ENCODE measurements at regions of chrX and their contacts with region 1.

Region 1: DNA sequence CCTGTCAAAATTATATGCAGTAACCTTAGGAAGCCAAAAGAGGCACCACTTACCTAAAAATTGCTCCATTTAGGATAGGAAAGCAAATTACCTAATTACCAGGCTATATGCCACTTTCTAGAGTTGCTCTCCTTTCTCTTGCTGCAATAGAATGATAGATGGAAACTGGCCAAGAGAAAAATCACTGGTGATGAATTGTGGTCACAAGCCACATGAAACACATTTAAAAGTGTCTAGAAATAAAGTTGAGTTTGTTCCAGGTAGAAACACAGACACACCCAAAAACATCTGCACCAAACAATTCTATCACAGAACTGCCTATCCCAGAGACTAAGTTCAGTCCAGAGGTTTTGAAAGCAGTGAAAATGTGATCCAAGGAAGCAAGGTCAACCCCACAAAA is 337.7 kb downstream of the PCDH19 start:
- DNase-seq: peak; percentile 73
- H3K4me3 ChIP-seq: no peak overlapping the region
- H3K27ac ChIP-seq: no peak overlapping the region
- H3K4me1 ChIP-seq: no peaks in the 10 kb centered on the region
- H3K27me3 ChIP-seq: peaks cover 2% of the 10 kb centered on the region
- CTCF ChIP-seq: peak; percentile 37

Region 2: GRCh38 chrX:100098660-100099375 is 26.5 kb after region 1 on chrX:
- CTCF ChIA-PET with region 1: no interaction called
- dilution Hi-C with region 1: no loop called
- in situ Hi-C with region 1: no loop called
- intact Hi-C with region 1: loop called (anchors 1 kb)
- DNase-seq: peak; percentile 68
- H3K4me3 ChIP-seq: no peak overlapping the region
- H3K27ac ChIP-seq: peak overlapping the region; percentile 29
- H3K4me1 ChIP-seq: peaks cover 4% of the 10 kb centered on the region
- H3K27me3 ChIP-seq: no peaks in the 10 kb centered on the region
- CTCF ChIP-seq: peak in 1 of 2 donors; percentile 35

Region 3: GRCh38 chrX:100328351-100328750 is 256.0 kb after region 1 on chrX:
- CTCF ChIA-PET with region 1: no interaction called
- dilution Hi-C with region 1: no loop called
- in situ Hi-C with region 1: no loop called
- intact Hi-C with region 1: no loop called
- DNase-seq: no peak
- H3K4me3 ChIP-seq: no peak overlapping the region
- H3K27ac ChIP-seq: no peak overlapping the region
- H3K4me1 ChIP-seq: no peaks in the 10 kb centered on the region
- H3K27me3 ChIP-seq: no peaks in the 10 kb centered on the region
- CTCF ChIP-seq: no peak

Region 4: DNA sequence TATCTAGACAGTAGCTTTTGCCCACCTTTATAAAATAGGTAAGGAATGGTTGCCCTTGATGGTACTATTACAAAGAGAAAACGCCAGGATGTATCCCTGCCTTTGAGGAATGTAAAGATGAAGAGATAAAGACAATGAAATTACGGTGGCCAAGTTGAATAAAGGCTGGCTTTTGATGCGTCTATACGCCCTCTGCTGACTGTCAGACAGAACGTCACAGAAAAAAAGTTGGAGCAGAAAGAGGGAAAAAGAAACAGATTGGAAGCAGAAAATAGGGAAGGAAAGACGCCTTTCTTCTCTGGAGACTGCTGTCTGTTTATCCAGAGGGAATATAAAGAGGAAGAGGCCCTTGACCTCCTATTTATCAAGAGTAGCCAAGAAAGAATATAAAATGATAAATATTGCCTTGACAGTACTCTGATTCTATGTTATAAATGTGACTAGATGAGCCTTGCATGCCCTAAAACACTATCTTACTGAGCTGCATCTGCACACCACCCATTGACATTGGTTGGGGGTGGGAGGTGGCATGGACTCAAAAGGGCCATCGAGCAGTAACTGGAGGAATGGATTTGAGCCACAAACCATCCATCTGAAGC is 307.2 kb after region 1 on chrX:
- CTCF ChIA-PET with region 1: no interaction called
- dilution Hi-C with region 1: no loop called
- in situ Hi-C with region 1: no loop called
- intact Hi-C with region 1: loop called (anchors 1 kb)
- DNase-seq: peak; percentile 36
- H3K4me3 ChIP-seq: no peak overlapping the region
- H3K27ac ChIP-seq: no peak overlapping the region
- H3K4me1 ChIP-seq: no peaks in the 10 kb centered on the region
- H3K27me3 ChIP-seq: no peaks in the 10 kb centered on the region
- CTCF ChIP-seq: peak; percentile 69 to 70

Region 5: GRCh38 chrX:100850317-100850716 is 778.0 kb after region 1 on chrX:
- CTCF ChIA-PET with region 1: no interaction called
- dilution Hi-C with region 1: no loop called
- in situ Hi-C with region 1: no loop called
- intact Hi-C with region 1: no loop called
- DNase-seq: no peak
- H3K4me3 ChIP-seq: no peak overlapping the region
- H3K27ac ChIP-seq: no peak overlapping the region
- H3K4me1 ChIP-seq: no peaks in the 10 kb centered on the region
- H3K27me3 ChIP-seq: no peaks in the 10 kb centered on the region
- CTCF ChIP-seq: no peak